MCF 10A (cell line): ENCODE measurements at regions of chr6 and their contacts with region 1.

Region 1: DNA sequence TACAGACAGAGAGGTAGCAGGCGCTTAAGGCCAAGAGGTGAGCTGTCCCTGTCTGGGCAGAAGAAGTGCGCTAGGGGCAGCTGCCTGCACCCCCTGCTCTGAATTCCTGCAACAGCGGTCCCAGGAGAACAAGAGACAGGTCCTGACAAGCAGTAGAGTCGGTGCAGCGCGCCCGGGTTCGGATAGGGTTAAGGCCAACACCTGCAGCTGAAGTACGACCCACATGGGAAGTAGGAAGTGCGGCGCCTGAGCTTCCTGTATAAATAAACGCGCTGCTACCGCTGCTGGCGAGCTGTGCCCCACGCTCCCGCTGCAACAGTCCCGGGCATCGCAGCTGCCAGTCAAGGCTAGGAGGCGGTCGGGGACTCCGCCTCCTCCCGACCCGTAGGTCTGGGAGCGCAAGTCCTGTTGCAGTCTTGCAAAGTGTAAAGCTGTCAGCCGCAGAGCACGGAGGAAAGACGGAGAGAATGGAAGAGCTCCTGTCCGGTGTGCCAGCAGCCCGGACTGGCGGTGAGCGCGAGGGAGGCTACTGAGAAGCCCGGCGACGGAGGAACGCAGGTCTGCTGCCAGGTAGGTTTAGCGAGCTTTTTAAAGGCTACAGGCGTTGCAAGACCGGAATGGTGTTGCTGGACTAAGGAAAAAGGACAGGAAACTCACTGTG is at the start of gene RNF144B:
- DNase-seq: peak; percentile 94
- H3K4me3 Mint-ChIP-seq: peak within 1 kb of the TSS; percentile 84
- H3K27ac Mint-ChIP-seq: peak within 1 kb of the TSS; percentile 73
- H3K4me1 Mint-ChIP-seq: peaks cover 17% of the 10 kb centered on the region
- H3K27me3 Mint-ChIP-seq: no peaks in the 10 kb centered on the region
- CTCF ChIP-seq: no peak
- total RNA-seq, gene RNF144B: 40.6 and 57.9 TPM in 2 replicates

Region 2: DNA sequence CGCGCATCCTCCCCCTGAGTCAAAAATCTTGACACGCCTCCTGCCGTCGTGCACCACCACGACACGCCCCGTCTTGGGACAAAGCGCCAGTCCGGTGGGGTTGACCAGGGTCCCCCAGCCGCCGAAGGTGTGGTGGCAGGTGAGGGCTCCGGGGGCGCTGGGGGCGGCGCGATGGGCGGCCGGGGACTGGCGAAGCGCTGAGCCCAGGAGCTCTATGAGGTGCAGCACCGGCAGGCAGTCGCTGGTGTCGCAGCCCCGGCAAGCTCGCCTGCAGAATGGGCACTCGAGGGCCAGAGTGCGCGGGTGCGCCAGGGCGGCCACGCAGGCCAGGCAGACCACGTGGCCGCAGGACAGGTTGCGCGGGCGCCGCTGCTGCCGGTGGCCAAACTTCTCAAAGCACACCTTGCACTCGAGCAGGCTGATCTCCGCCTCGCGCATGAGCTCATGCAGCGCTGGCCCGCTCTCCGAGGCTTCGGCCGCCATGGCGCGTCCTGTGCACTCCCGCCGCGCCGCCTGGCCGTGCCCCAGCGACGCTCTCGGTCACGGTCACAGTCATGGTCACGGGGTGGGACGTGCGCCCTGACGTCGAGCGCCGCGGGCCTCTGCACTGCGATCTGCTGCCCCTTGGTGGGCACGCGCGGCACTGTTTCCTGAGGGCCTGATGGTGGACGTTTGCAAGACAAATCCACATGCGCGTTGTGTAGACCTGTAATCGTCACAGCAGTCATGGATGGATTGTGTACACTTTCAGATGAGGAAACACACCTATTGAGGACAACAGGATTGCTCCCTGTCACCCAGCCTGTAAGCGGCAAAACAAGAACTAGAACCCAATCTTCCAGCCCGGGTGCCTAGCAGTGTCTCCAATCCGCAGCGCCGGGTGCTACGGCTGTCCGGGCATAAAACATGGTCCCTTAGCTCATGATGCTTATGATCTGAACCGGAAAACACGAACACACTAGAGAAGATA is 264.8 kb before region 1 on chr6 and contains the start of gene NHLRC1:
- CTCF ChIA-PET with region 1: no interaction called
- POLR2A ChIA-PET with region 1: no interaction called
- intact Hi-C with region 1: no loop called
- DNase-seq: no peak
- H3K4me3 Mint-ChIP-seq: no peak within 1 kb of the TSS
- H3K27ac Mint-ChIP-seq: no peak within 1 kb of the TSS
- H3K4me1 Mint-ChIP-seq: no peaks in the 10 kb centered on the region
- H3K27me3 Mint-ChIP-seq: no peaks in the 10 kb centered on the region
- CTCF ChIP-seq: peak; percentile 27
- total RNA-seq, gene NHLRC1: not detected in 2 replicates

Region 3: DNA sequence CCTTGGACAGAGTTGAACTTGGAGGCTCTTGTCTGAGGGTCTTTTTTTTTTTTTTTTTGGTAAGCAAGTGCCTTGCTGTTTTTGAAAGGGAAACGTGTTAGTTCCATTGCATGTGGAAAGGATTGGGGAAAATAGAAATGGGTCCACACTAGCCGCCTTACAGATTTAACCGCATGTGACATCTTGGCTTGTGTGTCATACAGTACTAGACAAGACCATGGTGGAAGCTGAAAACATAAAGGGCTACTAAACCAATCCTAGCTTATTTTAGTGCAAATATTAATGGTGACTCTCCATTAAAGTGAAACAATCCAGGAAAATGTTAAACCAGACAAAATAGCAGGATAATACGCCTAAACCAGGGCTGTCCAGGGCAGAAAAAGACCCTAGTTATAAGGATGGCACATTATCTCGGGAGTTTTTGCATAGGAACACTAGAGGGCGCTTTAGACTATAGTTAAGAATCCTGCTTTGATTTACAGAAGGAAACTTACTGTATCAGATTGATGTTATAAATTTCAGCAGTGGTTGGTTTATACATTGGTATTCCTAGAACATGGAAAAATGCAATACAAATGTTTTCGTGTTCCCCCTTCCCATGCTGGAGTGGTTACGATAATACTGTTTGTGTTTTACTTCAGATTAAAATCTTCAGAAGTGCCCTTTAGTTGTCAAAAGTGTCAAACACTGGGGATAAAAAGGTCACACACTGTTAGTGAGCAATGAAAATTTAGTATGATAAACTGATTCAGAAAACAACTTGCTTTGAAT is 63.1 kb before region 1 on chr6:
- CTCF ChIA-PET with region 1: interaction called, 11 read pairs
- POLR2A ChIA-PET with region 1: interaction called, 18 read pairs
- intact Hi-C with region 1: loop called (anchors 1 kb)
- DNase-seq: peak; percentile 64
- H3K4me3 Mint-ChIP-seq: no peak overlapping the region
- H3K27ac Mint-ChIP-seq: no peak overlapping the region
- H3K4me1 Mint-ChIP-seq: peaks cover 14% of the 10 kb centered on the region
- H3K27me3 Mint-ChIP-seq: no peaks in the 10 kb centered on the region
- CTCF ChIP-seq: peak; percentile 51

Region 4: DNA sequence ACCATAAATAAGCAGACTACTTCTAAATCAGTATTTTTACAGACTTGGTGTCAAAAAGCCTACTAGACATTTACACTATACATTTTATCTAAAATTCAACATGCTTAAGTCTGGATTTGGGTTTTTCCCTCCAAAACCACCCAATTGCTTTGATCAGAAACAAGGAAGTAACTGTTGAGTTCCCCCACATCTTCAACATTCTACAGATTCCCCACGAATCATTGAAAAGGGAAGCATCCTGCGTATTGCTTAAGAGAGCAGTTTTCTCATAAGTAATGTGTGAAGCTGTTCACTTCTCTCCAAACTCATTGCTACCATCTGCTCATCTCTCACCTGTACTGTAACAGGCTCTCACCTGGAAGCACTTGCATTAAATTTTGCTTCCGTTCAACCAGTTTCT is 36.5 kb before region 1 on chr6:
- CTCF ChIA-PET with region 1: interaction called, 19 read pairs
- POLR2A ChIA-PET with region 1: interaction called, 139 read pairs
- intact Hi-C with region 1: loop called (anchors 1 kb)
- DNase-seq: no peak
- H3K4me3 Mint-ChIP-seq: no peak overlapping the region
- H3K27ac Mint-ChIP-seq: peak overlapping the region; percentile 86
- H3K4me1 Mint-ChIP-seq: peaks cover 41% of the 10 kb centered on the region
- H3K27me3 Mint-ChIP-seq: no peaks in the 10 kb centered on the region
- CTCF ChIP-seq: no peak

Region 5: GRCh38 chr6:18368277-18369102 is 18.7 kb before region 1 on chr6:
- CTCF ChIA-PET with region 1: interaction called, 4 read pairs
- POLR2A ChIA-PET with region 1: interaction called, 28 read pairs
- intact Hi-C with region 1: no loop called
- DNase-seq: no peak
- H3K4me3 Mint-ChIP-seq: no peak overlapping the region
- H3K27ac Mint-ChIP-seq: no peak overlapping the region
- H3K4me1 Mint-ChIP-seq: peaks cover 6% of the 10 kb centered on the region
- H3K27me3 Mint-ChIP-seq: no peaks in the 10 kb centered on the region
- CTCF ChIP-seq: no peak

Region 6: DNA sequence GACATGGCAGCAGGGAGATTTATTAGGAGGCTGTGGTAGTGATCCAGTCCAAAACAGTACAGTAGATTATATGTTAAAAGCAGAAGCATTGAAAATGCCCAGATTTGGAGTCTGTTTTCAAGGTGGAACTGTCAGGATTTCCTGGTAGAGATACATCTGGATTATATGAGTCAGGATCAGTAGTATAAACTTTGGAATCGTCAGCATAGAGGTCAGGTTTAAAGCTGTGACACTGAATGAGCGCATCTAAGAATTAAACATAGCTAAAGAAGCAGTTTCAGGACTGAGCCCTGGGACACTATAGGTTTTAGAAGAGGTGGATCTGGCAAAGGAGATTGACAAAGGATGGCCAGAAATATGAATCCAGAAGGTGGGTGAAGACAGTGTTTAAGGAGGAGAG is 60.4 kb after region 1 on chr6:
- CTCF ChIA-PET with region 1: no interaction called
- POLR2A ChIA-PET with region 1: interaction called, 5 read pairs
- intact Hi-C with region 1: loop called (anchors 5 kb)
- DNase-seq: no peak
- H3K4me3 Mint-ChIP-seq: no peak overlapping the region
- H3K27ac Mint-ChIP-seq: no peak overlapping the region
- H3K4me1 Mint-ChIP-seq: peaks cover 24% of the 10 kb centered on the region
- H3K27me3 Mint-ChIP-seq: no peaks in the 10 kb centered on the region
- CTCF ChIP-seq: no peak

Region 7: GRCh38 chr6:18720075-18720474 is 332.9 kb after region 1 on chr6:
- CTCF ChIA-PET with region 1: no interaction called
- POLR2A ChIA-PET with region 1: no interaction called
- intact Hi-C with region 1: no loop called
- DNase-seq: no peak
- H3K4me3 Mint-ChIP-seq: no peak overlapping the region
- H3K27ac Mint-ChIP-seq: no peak overlapping the region
- H3K4me1 Mint-ChIP-seq: no peaks in the 10 kb centered on the region
- H3K27me3 Mint-ChIP-seq: no peaks in the 10 kb centered on the region
- CTCF ChIP-seq: no peak